Activated CD4-positive, alpha-beta T cell treated with anti-CD3 and anti-CD28 coated beads, Interleukin-2, amount 10 ng/mL, durations not matched to agents 7 days and 5 days (primary cell): ENCODE measurements at regions of chr14 and their contacts with region 1.

Region 1: DNA sequence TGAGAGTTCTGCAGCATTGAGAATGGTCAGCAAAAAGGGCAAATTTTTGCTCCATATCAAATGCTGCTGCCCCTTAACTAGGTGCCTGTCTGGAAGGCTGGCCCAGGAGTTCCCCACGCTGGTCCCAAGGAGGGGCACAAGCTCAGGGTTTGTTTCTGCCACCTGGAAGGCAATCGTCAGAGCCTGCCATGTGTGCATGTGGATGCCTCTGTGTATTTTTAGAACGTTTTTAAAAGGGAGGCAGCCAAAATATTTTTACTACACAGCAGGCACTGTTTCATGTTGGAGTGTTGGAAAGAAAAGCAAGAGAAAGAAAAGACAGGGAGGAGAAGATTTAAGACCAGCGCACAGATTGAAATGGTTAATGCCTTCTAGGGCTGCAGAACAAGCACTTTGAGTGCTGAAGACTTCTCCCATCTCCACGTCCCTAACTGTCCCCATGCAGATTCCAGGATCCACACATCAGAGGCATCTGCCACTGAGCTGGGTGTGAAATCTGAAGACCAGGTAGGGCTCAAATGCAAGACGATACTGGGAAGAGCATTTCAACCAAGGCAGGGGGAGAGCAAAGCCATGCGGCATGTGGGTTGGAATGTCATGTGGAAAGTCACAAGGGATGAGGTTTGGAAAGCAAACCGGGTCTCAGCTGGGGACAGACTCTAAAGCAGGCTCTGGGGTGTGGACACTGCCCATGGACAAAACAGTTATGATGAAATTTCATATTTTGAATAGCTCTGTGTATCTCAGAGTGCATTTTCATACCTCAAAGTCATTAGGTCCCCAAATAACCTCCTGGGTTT is 557.2 kb downstream of the BCL11B start:
- DNase-seq: no peak
- H3K4me3 Mint-ChIP-seq: no peak overlapping the region
- H3K27ac Mint-ChIP-seq: no peak overlapping the region
- H3K4me1 Mint-ChIP-seq: peaks cover 17% of the 10 kb centered on the region
- H3K27me3 Mint-ChIP-seq: no peaks in the 10 kb centered on the region

Region 2: DNA sequence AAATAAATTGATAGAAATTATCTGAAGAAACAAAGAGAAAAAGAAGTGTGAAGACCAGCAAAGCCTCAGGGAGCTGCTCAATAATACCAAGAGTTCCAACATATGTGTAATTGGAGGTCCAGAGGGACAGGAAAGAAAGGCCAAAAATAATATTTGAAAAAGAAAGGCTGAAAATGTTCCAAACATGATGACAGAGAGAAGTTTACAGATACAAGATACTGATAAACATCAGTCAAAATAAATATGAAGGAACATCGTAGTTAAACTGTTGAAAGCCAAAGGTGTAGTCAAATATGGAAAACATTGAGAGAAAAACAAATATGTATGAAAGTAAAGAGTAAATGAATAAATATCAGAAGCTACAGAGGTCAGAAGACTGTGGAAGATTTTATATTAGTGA is 58.4 kb before region 1 on chr14:
- CTCF ChIA-PET with region 1: no interaction called
- POLR2A ChIA-PET with region 1: no interaction called
- DNase-seq: no peak
- H3K4me3 Mint-ChIP-seq: no peak overlapping the region
- H3K27ac Mint-ChIP-seq: no peak overlapping the region
- H3K4me1 Mint-ChIP-seq: no peaks in the 10 kb centered on the region
- H3K27me3 Mint-ChIP-seq: no peaks in the 10 kb centered on the region

Region 3: GRCh38 chr14:98670609-98671008 is 44.2 kb before region 1 on chr14:
- CTCF ChIA-PET with region 1: no interaction called
- POLR2A ChIA-PET with region 1: no interaction called
- DNase-seq: no peak
- H3K4me3 Mint-ChIP-seq: no peak overlapping the region
- H3K27ac Mint-ChIP-seq: no peak overlapping the region
- H3K4me1 Mint-ChIP-seq: no peaks in the 10 kb centered on the region
- H3K27me3 Mint-ChIP-seq: peaks cover 5% of the 10 kb centered on the region

Region 4: DNA sequence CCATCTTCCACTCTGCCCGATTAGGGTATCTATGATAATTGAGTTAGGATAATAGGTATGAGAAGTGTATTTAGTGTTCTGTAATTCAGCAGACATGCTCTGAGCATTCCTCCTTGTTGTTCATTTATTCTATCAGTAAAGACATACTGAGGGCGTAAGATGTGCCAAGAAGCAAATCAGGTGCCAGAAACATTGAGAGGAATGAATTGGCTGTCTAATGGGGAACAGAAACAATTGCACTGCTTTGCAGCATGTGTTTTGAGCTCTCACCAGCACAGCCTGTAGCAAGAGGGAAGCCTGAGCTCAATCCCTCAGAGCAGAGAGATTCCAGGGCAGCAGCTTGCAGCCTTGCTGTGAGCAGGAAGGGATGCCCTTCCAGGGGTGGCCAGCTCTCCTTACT is 32.1 kb before region 1 on chr14:
- CTCF ChIA-PET with region 1: no interaction called
- POLR2A ChIA-PET with region 1: no interaction called
- DNase-seq: no peak
- H3K4me3 Mint-ChIP-seq: no peak overlapping the region
- H3K27ac Mint-ChIP-seq: no peak overlapping the region
- H3K4me1 Mint-ChIP-seq: no peaks in the 10 kb centered on the region
- H3K27me3 Mint-ChIP-seq: no peaks in the 10 kb centered on the region

Region 5: GRCh38 chr14:98704441-98704840 is 10.4 kb before region 1 on chr14:
- CTCF ChIA-PET with region 1: interaction called, 13 read pairs
- POLR2A ChIA-PET with region 1: no interaction called
- DNase-seq: peak; percentile 46
- H3K4me3 Mint-ChIP-seq: no peak overlapping the region
- H3K27ac Mint-ChIP-seq: peak overlapping the region; percentile 42
- H3K4me1 Mint-ChIP-seq: peaks cover 24% of the 10 kb centered on the region
- H3K27me3 Mint-ChIP-seq: no peaks in the 10 kb centered on the region

Region 6: GRCh38 chr14:98726585-98727405 is 12.0 kb after region 1 on chr14:
- CTCF ChIA-PET with region 1: no interaction called
- POLR2A ChIA-PET with region 1: no interaction called
- DNase-seq: no peak
- H3K4me3 Mint-ChIP-seq: no peak overlapping the region
- H3K27ac Mint-ChIP-seq: no peak overlapping the region
- H3K4me1 Mint-ChIP-seq: no peaks in the 10 kb centered on the region
- H3K27me3 Mint-ChIP-seq: peaks cover 5% of the 10 kb centered on the region